ENCODE measurements at regions of chr5 and their contacts with region 1.

Region 1: DNA sequence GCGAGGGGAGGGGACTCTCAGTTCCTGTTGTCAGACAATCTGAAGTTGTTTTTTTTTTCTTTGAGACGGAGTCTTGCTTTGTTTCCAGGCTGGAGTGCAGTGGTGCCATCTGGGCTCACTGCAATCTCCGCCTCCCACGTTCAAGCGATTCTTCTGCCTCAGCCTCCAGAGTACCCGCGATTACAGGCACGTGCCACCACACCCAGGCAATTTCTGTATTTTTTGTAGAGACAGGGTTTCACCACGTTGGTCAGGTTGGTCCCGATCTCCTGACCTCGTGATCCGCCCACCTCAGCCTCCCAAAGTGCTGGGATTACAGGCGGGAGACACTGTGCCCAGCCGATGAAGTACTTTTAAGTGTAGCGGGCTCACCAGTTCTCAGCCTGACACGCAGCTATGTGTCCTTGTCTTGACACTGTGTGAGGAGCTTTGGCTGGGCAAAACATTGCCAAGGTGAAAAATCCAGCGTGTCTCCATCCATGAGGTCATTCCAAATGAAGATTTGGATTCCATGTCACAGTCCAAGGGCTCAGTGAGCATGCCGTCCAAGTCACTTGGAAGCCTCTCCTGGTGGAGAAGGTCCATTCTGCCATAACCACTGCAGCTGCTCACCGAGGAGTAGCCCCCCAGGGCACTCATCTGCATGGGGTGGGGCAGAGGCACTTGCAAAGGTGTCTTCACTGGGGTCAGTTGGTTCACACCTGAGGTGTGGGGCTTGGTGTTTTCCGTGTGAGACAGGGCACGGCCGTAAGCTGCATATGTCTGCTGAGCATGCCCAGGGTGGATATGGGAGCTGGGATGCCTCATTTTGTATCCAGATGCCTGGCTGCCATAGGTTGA is 32.0 kb downstream of the OR2V1 start:
- DNase-seq: peak; percentile 30
- ATAC-seq: no peak
- H3K4me3 Mint-ChIP-seq: no peak overlapping the region
- H3K27ac Mint-ChIP-seq: no peak overlapping the region
- H3K4me1 Mint-ChIP-seq: peaks cover 8% of the 10 kb centered on the region
- H3K27me3 Mint-ChIP-seq: peaks cover 24% of the 10 kb centered on the region

Region 2: GRCh38 chr5:181005791-181006190 is 93.2 kb before region 1 on chr5:
- CTCF ChIA-PET with region 1: no interaction called
- POLR2A ChIA-PET with region 1: no interaction called
- intact Hi-C with region 1: no loop called
- DNase-seq: no peak
- ATAC-seq: no peak
- H3K4me3 Mint-ChIP-seq: no peak overlapping the region
- H3K27ac Mint-ChIP-seq: no peak overlapping the region
- H3K4me1 Mint-ChIP-seq: no peaks in the 10 kb centered on the region
- H3K27me3 Mint-ChIP-seq: peaks cover 9% of the 10 kb centered on the region

Region 3: GRCh38 chr5:181052672-181053487 is 46.1 kb before region 1 on chr5:
- CTCF ChIA-PET with region 1: interaction called, 3 read pairs
- POLR2A ChIA-PET with region 1: no interaction called
- intact Hi-C with region 1: loop called in 1 of 2 experiments (anchors 2 kb)
- DNase-seq: peak; percentile 45
- ATAC-seq: peak; percentile 36
- H3K4me3 Mint-ChIP-seq: peak overlapping the region; percentile 55
- H3K27ac Mint-ChIP-seq: no peak overlapping the region
- H3K4me1 Mint-ChIP-seq: peaks cover 11% of the 10 kb centered on the region
- H3K27me3 Mint-ChIP-seq: peaks cover 73% of the 10 kb centered on the region